Dorsolateral prefrontal cortex (tissue), 120 donors: ENCODE measurements at regions of chr2 and their contacts with region 1.

Region 1: DNA sequence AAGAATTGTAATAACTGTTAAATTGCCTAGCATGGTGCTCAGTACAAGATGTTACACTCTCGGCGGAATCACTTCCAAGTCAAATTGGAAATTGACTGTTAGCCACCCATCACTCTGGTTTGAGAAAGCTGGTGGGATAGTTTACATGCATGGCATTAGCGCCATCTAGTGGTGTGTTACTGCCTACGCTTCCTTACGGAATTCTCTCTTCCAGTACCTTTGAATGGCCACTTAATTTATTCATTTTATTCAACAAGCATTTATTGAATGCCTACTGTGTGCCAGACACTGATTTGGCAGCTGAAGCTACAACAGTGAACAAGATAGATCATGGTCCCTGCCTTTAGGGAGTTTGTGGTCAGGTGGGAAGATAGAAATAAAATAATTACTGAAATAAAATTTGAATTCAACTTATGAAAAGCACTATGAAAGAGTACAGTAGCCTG is 171.2 kb downstream of the TMEM247 start:
- DNase-seq: peak in 7 of 10 donors; percentile 49 to 86 (median 67)
- H3K4me3 ChIP-seq: no peak overlapping the region
- H3K27ac ChIP-seq: no peak overlapping the region
- H3K27me3 ChIP-seq: no peaks in the 10 kb centered on the region
- CTCF ChIP-seq: peak; percentile 88 to 99 (median 96)

Region 2: DNA sequence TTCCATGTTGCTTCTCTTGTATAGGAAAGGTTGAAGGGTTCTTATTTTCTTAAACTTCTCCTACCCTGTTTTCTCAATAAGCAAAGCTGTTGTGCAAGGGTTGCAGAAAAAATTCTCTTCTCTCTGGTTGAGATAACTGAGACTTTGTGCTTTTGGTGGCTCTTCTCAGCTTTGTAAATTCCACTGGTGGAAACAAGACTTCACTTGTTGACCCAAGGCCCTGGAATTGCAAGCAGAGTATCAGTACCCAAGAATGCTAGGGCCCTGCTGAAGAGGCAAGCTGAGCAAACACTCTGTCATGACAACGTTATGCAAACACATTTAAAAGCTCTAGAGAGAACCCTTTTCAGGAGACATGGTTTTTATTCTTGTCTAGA is 648.1 kb before region 1 on chr2:
- intact Hi-C with region 1: loop called in 1 of 2 experiments (anchors 10 kb)
- DNase-seq: no peak
- H3K4me3 ChIP-seq: no peak overlapping the region
- H3K27ac ChIP-seq: peak overlapping the region in 2 of 59 donors; percentile 8 to 12
- H3K27me3 ChIP-seq: no peaks in the 10 kb centered on the region
- CTCF ChIP-seq: no peak

Region 3: DNA sequence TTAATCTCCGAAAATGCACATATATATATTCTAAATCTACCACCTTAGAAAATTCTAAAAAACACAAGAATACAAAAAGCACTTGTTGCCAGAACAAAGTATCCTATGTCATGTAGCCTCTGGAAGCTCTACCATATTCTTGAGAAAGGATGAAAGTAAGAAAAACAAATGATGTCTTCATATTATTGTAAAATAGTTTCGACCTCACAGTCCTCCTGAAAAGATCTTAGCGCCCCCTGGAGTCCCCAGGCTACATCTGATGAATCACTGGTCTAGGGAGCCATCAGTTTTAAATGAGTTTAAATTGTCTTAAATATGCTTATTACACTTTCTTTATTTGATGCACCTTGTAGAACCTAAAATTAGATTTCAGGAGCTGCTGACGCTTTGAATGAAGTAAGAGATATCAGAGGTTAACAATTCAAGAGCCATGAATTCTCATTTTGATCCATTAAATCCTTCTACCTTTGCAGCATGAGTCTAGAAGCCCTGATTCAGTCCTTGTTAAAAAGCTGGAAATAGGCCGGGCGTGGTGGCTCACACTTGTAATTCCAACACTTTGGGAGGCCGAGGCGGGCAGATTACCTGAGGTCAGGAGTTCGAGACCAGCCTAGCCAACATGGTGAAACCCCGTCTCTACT is 126.2 kb after region 1 on chr2:
- intact Hi-C with region 1: loop called (anchors 5 to 10 kb)
- DNase-seq: peak in 3 of 10 donors; percentile 16 to 51 (median 48)
- H3K4me3 ChIP-seq: no peak overlapping the region
- H3K27ac ChIP-seq: no peak overlapping the region
- H3K27me3 ChIP-seq: no peaks in the 10 kb centered on the region
- CTCF ChIP-seq: peak in 55 of 56 donors; percentile 8 to 75 (median 54)

Region 4: GRCh38 chr2:46887028-46887885 is 236.7 kb after region 1 on chr2:
- intact Hi-C with region 1: loop called in 1 of 2 experiments (anchors 5 kb)
- DNase-seq: no peak
- H3K4me3 ChIP-seq: no peak overlapping the region
- H3K27ac ChIP-seq: no peak overlapping the region
- H3K27me3 ChIP-seq: no peaks in the 10 kb centered on the region
- CTCF ChIP-seq: no peak

Region 5: GRCh38 chr2:47323009-47323821 is 672.6 kb after region 1 on chr2:
- intact Hi-C with region 1: loop called in 1 of 2 experiments (anchors 10 kb)
- DNase-seq: peak; percentile 58 to 87 (median 78)
- H3K4me3 ChIP-seq: no peak overlapping the region
- H3K27ac ChIP-seq: peak overlapping the region in 52 of 59 donors; percentile 3 to 100 (median 90)
- H3K27me3 ChIP-seq: no peaks in the 10 kb centered on the region
- CTCF ChIP-seq: peak; percentile 72 to 99 (median 97)